GM23248 (cell line): ENCODE measurements at regions of chr18 and their contacts with region 1.

Region 1: GRCh38 chr18:62702253-62702652 is 13.1 kb upstream of the PHLPP1 start:
- DNase-seq: no peak
- H3K4me3 ChIP-seq: no peak overlapping the region
- H3K27ac ChIP-seq: no peak overlapping the region
- H3K4me1 ChIP-seq: no peaks in the 10 kb centered on the region
- H3K27me3 ChIP-seq: no peaks in the 10 kb centered on the region

Region 2: GRCh38 chr18:62596145-62597005 is 105.9 kb before region 1 on chr18:
- in situ Hi-C with region 1: loop called (anchors 10 kb)
- DNase-seq: peak; percentile 49
- H3K4me3 ChIP-seq: peak overlapping the region; percentile 69
- H3K27ac ChIP-seq: no peak overlapping the region
- H3K4me1 ChIP-seq: no peaks in the 10 kb centered on the region
- H3K27me3 ChIP-seq: peaks cover 16% of the 10 kb centered on the region; the same call in 1 of the 2 replicates

Region 3: GRCh38 chr18:62925031-62925688 is 222.9 kb after region 1 on chr18:
- in situ Hi-C with region 1: no loop called
- DNase-seq: peak; percentile 56
- H3K4me3 ChIP-seq: no peak overlapping the region
- H3K27ac ChIP-seq: no peak overlapping the region
- H3K4me1 ChIP-seq: 0 out of 2 replicates have a peak, but pooled peaks cover 7% of the 10 kb centered on the region
- H3K27me3 ChIP-seq: no peaks in the 10 kb centered on the region

Region 4: GRCh38 chr18:62957885-62958472 is 255.7 kb after region 1 on chr18:
- in situ Hi-C with region 1: no loop called
- DNase-seq: peak; percentile 51
- H3K4me3 ChIP-seq: no peak overlapping the region
- H3K27ac ChIP-seq: no peak overlapping the region
- H3K4me1 ChIP-seq: no peaks in the 10 kb centered on the region
- H3K27me3 ChIP-seq: no peaks in the 10 kb centered on the region